ENCODE measurements at regions of chr5 and their contacts with region 1.

Region 1: GRCh38 chr5:134904630-134905245 is at the start of gene PCBD2:
- DNase-seq: peak; percentile 96
- ATAC-seq: peak; percentile 89
- H3K4me3 Mint-ChIP-seq: peak within 1 kb of the TSS; percentile 94
- H3K27ac Mint-ChIP-seq: peak within 1 kb of the TSS; percentile 99
- H3K4me1 Mint-ChIP-seq: peaks cover 27% of the 10 kb centered on the region
- H3K27me3 Mint-ChIP-seq: no peaks in the 10 kb centered on the region
- total RNA-seq, gene PCBD2: 13.4 to 13.7 TPM

Region 2: GRCh38 chr5:134380346-134380745 is 524.4 kb before region 1 on chr5:
- CTCF ChIA-PET with region 1: no interaction called
- DNase-seq: no peak
- ATAC-seq: no peak
- H3K4me3 Mint-ChIP-seq: no peak overlapping the region
- H3K27ac Mint-ChIP-seq: no peak overlapping the region
- H3K4me1 Mint-ChIP-seq: peaks cover 21% of the 10 kb centered on the region
- H3K27me3 Mint-ChIP-seq: no peaks in the 10 kb centered on the region

Region 3: DNA sequence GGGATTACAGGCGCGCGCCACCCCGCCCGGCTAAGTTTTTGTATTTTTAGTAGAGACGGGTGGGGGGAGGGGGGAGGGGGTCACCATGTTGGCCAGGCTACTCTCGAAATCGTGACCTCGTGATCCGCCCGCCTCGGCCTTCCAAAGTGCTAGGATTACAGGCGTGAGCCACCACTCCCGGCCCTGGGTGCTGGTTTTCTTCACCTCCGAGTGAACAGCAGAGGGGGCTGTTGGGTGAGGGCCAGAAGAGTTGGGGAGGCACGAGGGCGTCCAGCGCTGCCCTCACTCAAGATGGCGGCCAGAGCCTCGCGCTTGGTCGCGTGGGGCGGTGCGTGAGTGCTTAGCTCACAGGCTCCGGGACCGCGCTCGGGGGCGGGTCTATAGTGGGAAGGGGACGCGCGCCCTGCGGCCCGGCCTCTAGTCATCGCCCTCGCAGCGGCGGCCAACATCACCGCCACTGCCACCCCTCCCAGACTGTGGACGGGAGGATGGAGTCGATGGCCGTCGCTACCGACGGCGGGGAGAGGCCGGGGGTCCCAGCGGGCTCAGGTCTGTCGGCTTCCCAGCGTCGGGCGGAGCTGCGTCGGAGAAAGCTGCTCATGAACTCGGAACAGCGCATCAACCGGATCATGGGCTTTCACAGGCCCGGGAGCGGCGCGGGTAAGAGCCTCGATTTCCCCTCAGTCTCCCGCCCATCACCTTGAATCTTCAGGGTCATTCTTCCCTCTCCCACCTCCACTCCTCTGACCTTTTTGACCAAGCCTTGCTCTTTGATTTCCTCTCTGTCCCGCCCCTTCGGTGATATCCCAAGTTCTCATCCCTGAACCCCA is 166.4 kb before region 1 on chr5 and contains the start of gene CAMLG:
- CTCF ChIA-PET with region 1: interaction called, 71 read pairs
- DNase-seq: peak; percentile 99
- ATAC-seq: peak; percentile 98
- H3K4me3 Mint-ChIP-seq: peak within 1 kb of the TSS; percentile 97
- H3K27ac Mint-ChIP-seq: peak within 1 kb of the TSS; percentile 91
- H3K4me1 Mint-ChIP-seq: peaks cover 29% of the 10 kb centered on the region
- H3K27me3 Mint-ChIP-seq: no peaks in the 10 kb centered on the region
- total RNA-seq, gene CAMLG: 20.4 to 28.4 TPM

Region 4: DNA sequence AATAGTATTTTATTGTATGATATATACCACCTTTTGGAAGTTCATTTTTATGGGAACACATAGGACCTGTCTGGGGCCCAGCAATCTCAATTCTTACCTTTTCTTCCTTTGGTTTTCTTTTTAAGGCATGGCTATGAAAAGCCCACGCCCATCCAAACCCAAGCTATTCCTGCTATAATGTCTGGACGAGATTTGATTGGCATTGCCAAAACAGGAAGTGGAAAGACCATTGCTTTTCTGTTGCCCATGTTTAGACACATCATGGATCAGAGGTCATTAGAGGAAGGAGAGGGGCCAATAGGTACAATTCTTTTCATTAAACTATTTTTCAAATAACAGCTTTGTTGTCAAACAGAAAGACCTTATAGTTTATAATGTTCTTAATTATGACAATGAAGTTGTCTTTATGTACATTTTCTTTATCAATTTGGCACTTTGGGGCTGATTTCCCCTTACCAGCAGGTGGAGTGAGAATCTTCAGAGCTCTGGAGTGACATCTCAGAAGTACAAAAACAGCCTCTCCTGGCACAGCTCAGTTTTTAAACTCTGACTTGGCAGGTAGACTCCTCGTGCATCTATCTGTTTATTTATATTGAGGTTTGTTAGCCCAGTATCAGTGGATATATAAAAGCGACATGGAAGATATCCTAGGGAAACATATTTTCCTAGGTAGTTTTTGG is 120.4 kb before region 1 on chr5:
- CTCF ChIA-PET with region 1: interaction called, 10 read pairs
- DNase-seq: no peak
- ATAC-seq: no peak
- H3K4me3 Mint-ChIP-seq: no peak overlapping the region
- H3K27ac Mint-ChIP-seq: no peak overlapping the region
- H3K4me1 Mint-ChIP-seq: no peaks in the 10 kb centered on the region
- H3K27me3 Mint-ChIP-seq: no peaks in the 10 kb centered on the region

Region 5: DNA sequence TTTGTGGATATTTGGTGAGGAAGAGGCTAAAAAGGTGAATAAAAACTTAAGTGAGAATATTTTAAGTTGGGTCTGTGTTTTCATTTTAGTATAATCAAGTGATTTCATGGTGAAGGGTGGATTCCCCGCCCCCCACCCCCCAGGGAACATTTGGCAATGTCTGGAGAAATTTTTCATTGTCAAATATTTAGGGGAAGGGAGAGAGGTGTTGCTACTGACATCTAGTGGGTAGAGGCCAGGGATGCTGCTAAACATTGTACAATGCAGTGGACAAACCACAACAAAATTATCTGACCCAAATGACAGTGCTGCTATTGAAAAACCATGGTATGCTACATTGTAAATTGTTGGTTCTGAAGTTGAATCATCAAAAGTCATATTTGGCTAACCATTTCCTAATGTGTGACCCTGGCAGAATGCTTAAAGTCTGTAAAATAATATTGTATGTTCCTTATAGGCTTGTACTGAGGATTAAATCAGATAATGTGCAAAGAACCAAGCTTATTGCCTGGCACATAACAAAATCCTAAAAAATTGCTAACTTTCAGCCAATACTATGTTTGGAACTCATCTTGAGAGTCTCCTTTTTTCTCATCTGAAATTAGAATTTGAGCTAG is 53.3 kb before region 1 on chr5:
- CTCF ChIA-PET with region 1: interaction called, 13 read pairs
- DNase-seq: peak; percentile 42
- ATAC-seq: no peak
- H3K4me3 Mint-ChIP-seq: no peak overlapping the region
- H3K27ac Mint-ChIP-seq: peak overlapping the region; percentile 7
- H3K4me1 Mint-ChIP-seq: peaks cover 59% of the 10 kb centered on the region
- H3K27me3 Mint-ChIP-seq: no peaks in the 10 kb centered on the region

Region 6: GRCh38 chr5:134887593-134888159 is 17.1 kb before region 1 on chr5:
- CTCF ChIA-PET with region 1: interaction called, 11 read pairs
- DNase-seq: no peak
- ATAC-seq: no peak
- H3K4me3 Mint-ChIP-seq: no peak overlapping the region
- H3K27ac Mint-ChIP-seq: no peak overlapping the region
- H3K4me1 Mint-ChIP-seq: peaks cover 2% of the 10 kb centered on the region
- H3K27me3 Mint-ChIP-seq: no peaks in the 10 kb centered on the region

Region 7: GRCh38 chr5:134917070-134917815 is 12.5 kb after region 1 on chr5:
- CTCF ChIA-PET with region 1: interaction called, 24 read pairs
- DNase-seq: no peak
- ATAC-seq: no peak
- H3K4me3 Mint-ChIP-seq: no peak overlapping the region
- H3K27ac Mint-ChIP-seq: no peak overlapping the region
- H3K4me1 Mint-ChIP-seq: peaks cover 21% of the 10 kb centered on the region
- H3K27me3 Mint-ChIP-seq: no peaks in the 10 kb centered on the region

Region 8: DNA sequence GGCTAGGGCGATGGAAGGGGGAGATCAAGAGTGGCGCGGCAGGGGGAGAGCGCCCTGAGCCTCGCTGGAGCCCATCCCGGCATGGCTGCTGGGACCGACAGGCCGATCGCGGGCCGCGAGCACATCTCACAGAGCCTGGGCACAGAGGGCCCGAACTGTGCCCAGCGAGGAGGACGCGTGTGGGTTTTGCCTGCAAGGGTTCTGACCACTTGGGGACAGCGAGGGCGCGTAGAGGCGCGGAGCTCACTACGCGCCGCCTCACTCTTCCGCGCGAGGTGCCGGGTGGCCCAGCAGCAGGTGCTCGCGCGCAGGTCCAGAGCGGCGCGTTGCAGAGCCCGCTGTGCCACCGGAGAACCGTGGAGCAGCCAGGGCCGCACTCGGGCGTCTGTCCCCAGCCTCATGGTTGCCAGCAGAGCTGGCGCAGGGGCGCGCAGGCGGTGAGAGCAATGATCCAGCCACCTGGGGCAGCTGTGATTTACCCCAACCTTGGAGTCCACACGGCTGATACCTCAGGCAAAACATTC is 145.6 kb after region 1 on chr5:
- CTCF ChIA-PET with region 1: no interaction called
- DNase-seq: no peak
- ATAC-seq: no peak
- H3K4me3 Mint-ChIP-seq: no peak overlapping the region
- H3K27ac Mint-ChIP-seq: no peak overlapping the region
- H3K4me1 Mint-ChIP-seq: peaks cover 3% of the 10 kb centered on the region
- H3K27me3 Mint-ChIP-seq: peaks cover 73% of the 10 kb centered on the region